SK-N-SH (cell line): ENCODE measurements at regions of chr17 and their contacts with region 1.

Region 1: GRCh38 chr17:63919311-63919723 is 678 bp upstream of the GH1 start:
- DNase-seq: peak; percentile 89
- H3K4me3 ChIP-seq: no peak overlapping the region
- H3K27ac ChIP-seq: no peak overlapping the region
- H3K4me1 ChIP-seq: no peaks in the 10 kb centered on the region
- H3K27me3 ChIP-seq: peaks cover 31% of the 10 kb centered on the region
- CTCF ChIP-seq: peak; percentile 96
- EP300 ChIP-seq: no peak
- RAD21 ChIP-seq: peak; percentile 92

Region 2: DNA sequence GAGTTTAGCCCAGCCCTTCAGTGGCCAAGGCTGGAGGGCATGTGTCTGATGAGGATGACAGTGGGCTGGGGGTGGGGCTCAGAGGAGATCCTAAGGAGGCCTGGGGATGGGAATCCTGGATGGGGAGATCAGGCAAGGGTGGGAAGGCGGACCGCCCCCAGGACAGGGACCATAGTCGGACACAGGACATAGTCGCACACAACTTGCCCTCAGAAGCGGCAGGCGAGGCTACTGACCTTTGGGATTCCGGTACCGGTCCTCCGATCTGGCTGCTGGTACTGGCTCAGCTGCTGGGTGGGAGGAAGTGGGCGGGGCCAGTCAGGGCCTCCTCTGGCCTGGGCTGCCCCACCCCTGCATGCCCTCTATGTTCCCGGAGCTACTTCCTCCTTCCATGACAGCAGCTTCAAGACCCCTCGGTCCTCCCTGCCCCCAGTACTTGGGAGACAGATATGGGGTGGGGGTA is 11.8 kb after region 1 on chr17:
- CTCF ChIA-PET with region 1: interaction called, 90 read pairs
- POLR2A ChIA-PET with region 1: no interaction called
- DNase-seq: peak; percentile 50
- H3K4me3 ChIP-seq: no peak overlapping the region
- H3K27ac ChIP-seq: no peak overlapping the region
- H3K4me1 ChIP-seq: no peaks in the 10 kb centered on the region
- H3K27me3 ChIP-seq: peaks cover 13% of the 10 kb centered on the region; the same call in 1 of the 2 replicates
- CTCF ChIP-seq: no peak
- EP300 ChIP-seq: no peak
- RAD21 ChIP-seq: no peak

Region 3: GRCh38 chr17:63954402-63955063 is 35.2 kb after region 1 on chr17:
- CTCF ChIA-PET with region 1: interaction called, 63 read pairs
- POLR2A ChIA-PET with region 1: no interaction called
- DNase-seq: peak; percentile 61
- H3K4me3 ChIP-seq: no peak overlapping the region
- H3K27ac ChIP-seq: no peak overlapping the region
- H3K4me1 ChIP-seq: peaks cover 0 to 13% of the 10 kb centered on the region in 2 experiments; a peak in 1 of 4 replicates
- H3K27me3 ChIP-seq: peaks cover 6% of the 10 kb centered on the region; the same call in 1 of the 2 replicates
- CTCF ChIP-seq: no peak
- EP300 ChIP-seq: no peak
- RAD21 ChIP-seq: no peak

Region 4: DNA sequence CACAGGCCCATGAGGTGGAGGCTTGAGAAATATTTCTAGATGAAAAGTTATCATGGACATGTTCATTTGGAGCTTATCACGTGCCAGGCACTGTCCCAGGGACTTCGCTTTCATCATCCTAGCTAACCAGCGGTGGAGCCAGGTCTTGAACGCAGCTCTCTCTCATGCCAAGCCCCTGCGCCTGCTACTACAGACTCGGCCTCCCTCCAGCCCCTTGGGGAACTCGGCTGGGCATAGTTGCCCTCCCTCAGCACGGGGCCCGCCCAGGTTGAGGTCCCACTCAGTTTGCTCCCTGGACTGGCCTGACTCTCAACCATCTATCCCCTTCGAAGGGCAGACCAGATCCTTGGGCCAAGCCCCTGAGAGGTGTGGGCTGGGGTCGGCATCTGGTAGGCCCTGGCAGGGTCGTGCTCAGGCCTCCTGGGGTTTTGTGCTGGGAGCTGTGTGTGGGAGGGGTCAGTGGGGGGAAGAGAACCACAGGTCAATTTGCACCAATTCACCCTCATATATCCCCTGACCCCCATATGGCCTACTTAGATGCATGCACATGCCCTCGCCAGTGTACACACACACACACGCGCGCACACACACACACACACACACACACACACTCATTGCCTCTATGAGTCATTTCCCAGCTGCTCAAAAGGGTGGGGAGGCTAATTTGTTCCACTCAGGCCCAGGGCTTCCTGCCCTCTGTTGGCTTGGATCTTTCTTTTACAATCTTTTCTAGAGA is 65.5 kb after region 1 on chr17:
- CTCF ChIA-PET with region 1: interaction called, 89 read pairs
- POLR2A ChIA-PET with region 1: no interaction called
- DNase-seq: no peak
- H3K4me3 ChIP-seq: no peak overlapping the region
- H3K27ac ChIP-seq: no peak overlapping the region
- H3K4me1 ChIP-seq: peaks cover 0 to 4% of the 10 kb centered on the region in 2 experiments; a peak in 1 of 4 replicates
- H3K27me3 ChIP-seq: no peaks in the 10 kb centered on the region
- CTCF ChIP-seq: no peak
- EP300 ChIP-seq: no peak
- RAD21 ChIP-seq: no peak

Region 5: GRCh38 chr17:64020056-64020766 is 100.9 kb after region 1 on chr17 and contains the start of gene ICAM2:
- CTCF ChIA-PET with region 1: interaction called, 214 read pairs
- POLR2A ChIA-PET with region 1: no interaction called
- DNase-seq: no peak
- H3K4me3 ChIP-seq: no peak within 1 kb of the TSS
- H3K27ac ChIP-seq: no peak within 1 kb of the TSS
- H3K4me1 ChIP-seq: no peaks in the 10 kb centered on the region
- H3K27me3 ChIP-seq: no peaks in the 10 kb centered on the region
- CTCF ChIP-seq: no peak
- EP300 ChIP-seq: no peak
- RAD21 ChIP-seq: no peak
- polyA plus RNA-seq, gene ICAM2: 0.08 TPM in 1 of 2 replicates, not detected in the other